ENCODE measurements at regions of chr9 and their contacts with region 1.

Region 1: GRCh38 chr9:125255781-125256391 is 5.7 kb upstream of the GAPVD1 start:
- DNase-seq: no peak
- H3K4me3 ChIP-seq: no peak overlapping the region
- H3K27ac ChIP-seq: no peak overlapping the region
- H3K4me1 ChIP-seq: peaks cover under 1% of the 10 kb centered on the region
- H3K27me3 ChIP-seq: no peaks in the 10 kb centered on the region
- CTCF ChIP-seq: no peak
- POLR2A ChIP-seq: no peak

Region 2: GRCh38 chr9:125374443-125375309 is 118.8 kb after region 1 on chr9:
- intact Hi-C with region 1: loop called (anchors 10 kb)
- DNase-seq: no peak
- H3K4me3 ChIP-seq: peak overlapping the region in 1 of 2 donors; percentile 30
- H3K27ac ChIP-seq: no peak overlapping the region
- H3K4me1 ChIP-seq: peaks cover 13% of the 10 kb centered on the region
- H3K27me3 ChIP-seq: no peaks in the 10 kb centered on the region
- CTCF ChIP-seq: peak; percentile 24 to 71 (median 45)
- POLR2A ChIP-seq: no peak